Activated naive CD4-positive, alpha-beta T cell treated with anti-CD3 and anti-CD28 coated beads for 36 hours (primary cell): ENCODE measurements at regions of chr2 and their contacts with region 1.

Region 1: GRCh38 chr2:144382849-144383248 is 137.1 kb downstream of the ZEB2 start:
- DNase-seq: peak; percentile 29
- H3K4me3 Mint-ChIP-seq: no peak overlapping the region
- H3K27ac Mint-ChIP-seq: no peak overlapping the region
- H3K4me1 Mint-ChIP-seq: peaks cover 26% of the 10 kb centered on the region
- H3K27me3 Mint-ChIP-seq: peaks cover 9% of the 10 kb centered on the region

Region 2: GRCh38 chr2:144357623-144358373 is 25.1 kb before region 1 on chr2:
- CTCF ChIA-PET with region 1: no interaction called
- intact Hi-C with region 1: loop called (anchors 1 kb)
- DNase-seq: peak; percentile 47
- H3K4me3 Mint-ChIP-seq: no peak overlapping the region
- H3K27ac Mint-ChIP-seq: no peak overlapping the region
- H3K4me1 Mint-ChIP-seq: peaks cover 18% of the 10 kb centered on the region
- H3K27me3 Mint-ChIP-seq: no peaks in the 10 kb centered on the region

Region 3: GRCh38 chr2:144424559-144425240 is 41.9 kb after region 1 on chr2:
- CTCF ChIA-PET with region 1: no interaction called
- intact Hi-C with region 1: loop called (anchors 1 kb)
- DNase-seq: peak; percentile 35
- H3K4me3 Mint-ChIP-seq: no peak overlapping the region
- H3K27ac Mint-ChIP-seq: no peak overlapping the region
- H3K4me1 Mint-ChIP-seq: peaks cover 10% of the 10 kb centered on the region
- H3K27me3 Mint-ChIP-seq: peaks cover 24% of the 10 kb centered on the region